ENCODE measurements at regions of chr5 and their contacts with region 1.

Region 1: GRCh38 chr5:157328277-157328912 is 62.5 kb downstream of the CYFIP2 start:
- DNase-seq: peak; percentile 94
- H3K27ac ChIP-seq: no peak overlapping the region
- CTCF ChIP-seq: peak; percentile 98

Region 2: DNA sequence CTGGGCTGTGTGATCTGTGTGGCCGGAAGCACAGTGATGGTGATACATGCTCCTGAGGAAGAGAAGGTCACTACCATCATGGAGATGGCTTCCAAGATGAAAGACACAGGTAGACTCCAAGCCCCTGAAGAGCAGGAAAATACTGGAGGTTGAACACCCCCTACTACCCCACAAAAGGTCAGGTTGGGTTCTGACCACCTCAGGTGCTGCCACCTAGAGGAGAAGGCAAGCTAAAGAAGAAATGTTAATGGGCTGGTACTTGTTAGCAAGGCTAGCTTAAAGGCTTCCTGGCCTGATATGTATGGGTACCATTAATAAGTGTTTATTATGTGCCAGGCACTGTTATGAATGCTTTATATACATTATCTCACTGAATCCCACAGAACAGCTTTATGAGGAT is 143.3 kb after region 1 on chr5:
- CTCF ChIA-PET with region 1: interaction called, 15 read pairs
- POLR2A ChIA-PET with region 1: interaction called, 3 read pairs
- DNase-seq: peak; percentile 48
- H3K27ac ChIP-seq: no peak overlapping the region
- CTCF ChIP-seq: peak; percentile 76

Region 3: DNA sequence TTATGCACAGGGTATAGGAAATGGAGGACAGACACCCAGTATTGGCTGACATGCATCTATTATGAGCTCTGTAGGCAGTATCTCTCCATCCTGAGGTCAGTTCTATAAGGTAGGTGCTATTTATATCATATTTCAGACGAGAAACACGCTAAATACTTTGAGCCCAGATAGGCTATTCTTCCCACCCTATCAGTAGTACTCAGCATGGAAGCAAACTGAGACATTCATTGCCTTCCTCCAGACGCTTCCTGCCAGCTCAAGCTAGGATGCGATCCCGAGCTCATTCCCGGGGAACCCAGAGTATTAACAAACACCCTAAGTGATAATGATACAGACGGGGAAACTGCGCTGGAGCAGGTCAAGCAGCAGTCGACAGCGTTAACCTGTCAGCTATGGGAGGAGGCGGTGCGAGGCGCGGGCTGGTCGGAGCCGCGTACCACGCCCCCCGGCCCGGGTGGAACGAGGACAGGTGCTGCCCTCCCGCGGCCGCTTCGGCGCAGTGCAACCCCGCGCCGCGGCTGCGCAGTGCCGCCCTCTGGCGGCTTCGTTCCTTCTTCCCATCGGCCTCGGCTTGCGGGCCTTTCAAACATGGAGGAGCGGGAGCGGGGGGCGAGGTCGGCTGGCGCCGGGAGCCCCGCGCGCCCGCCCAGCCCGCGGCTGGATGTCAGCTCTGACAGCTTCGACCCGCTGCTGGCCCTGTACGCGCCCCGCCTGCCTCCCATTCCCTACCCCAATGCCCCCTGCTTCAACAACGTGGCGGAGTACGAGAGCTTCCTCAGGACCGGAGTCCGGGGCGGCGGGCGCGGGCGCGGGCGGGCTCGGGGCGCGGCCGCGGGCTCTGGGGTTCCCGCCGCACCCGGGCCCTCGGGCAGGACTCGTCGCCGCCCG is 415.0 kb after region 1 on chr5 and contains the start of gene LSM11:
- CTCF ChIA-PET with region 1: interaction called, 15 read pairs
- POLR2A ChIA-PET with region 1: no interaction called
- DNase-seq: peak; percentile 98
- H3K27ac ChIP-seq: peak within 1 kb of the TSS; percentile 64
- CTCF ChIP-seq: peak; percentile 100

Measured in RWPE1 (cell line).